Activated B cell treated with CpG ODN at 0.5 μM for 24 hours (primary cell): ENCODE measurements at regions of chr2 and their contacts with region 1.

Region 1: DNA sequence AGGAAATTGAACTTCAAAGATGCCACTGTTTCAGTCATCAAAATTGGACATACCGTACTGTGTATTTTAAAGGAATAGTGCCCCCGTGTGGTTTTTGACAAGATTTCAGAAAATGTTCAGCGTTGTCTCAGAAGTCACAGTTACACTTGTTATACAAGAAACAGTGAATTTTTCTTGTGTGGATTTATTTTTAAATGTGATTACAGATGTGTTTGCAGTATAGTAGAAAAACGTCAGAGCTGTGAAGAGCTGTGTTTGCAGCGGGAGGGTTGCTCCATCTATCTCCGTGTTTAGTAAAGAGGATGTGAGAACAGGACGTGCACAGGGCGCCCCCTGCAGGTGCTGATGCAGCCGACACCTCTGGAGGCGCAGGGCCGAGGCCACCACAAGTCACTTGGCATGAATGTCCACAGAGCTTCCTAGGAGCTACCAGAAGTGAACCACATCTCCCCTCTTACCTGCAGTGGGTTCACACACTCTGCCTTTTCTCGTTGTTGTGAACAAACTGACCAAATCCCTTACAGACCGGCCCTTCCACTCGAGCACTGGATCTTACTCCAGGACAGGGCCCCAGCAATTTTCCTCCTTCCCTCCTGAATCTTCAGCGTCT is 73.1 kb downstream of the CACNB4 start:
- DNase-seq: peak; percentile 71
- ATAC-seq: peak; percentile 93
- H3K4me3 Mint-ChIP-seq: peak overlapping the region; percentile 85
- H3K27ac Mint-ChIP-seq: no peak overlapping the region
- H3K4me1 Mint-ChIP-seq: no peaks in the 10 kb centered on the region
- H3K27me3 Mint-ChIP-seq: peaks cover 5% of the 10 kb centered on the region
- CTCF ChIP-seq: peak; percentile 99

Region 2: GRCh38 chr2:151334082-151334815 is 691.5 kb before region 1 on chr2:
- CTCF ChIA-PET with region 1: no interaction called
- POLR2A ChIA-PET with region 1: no interaction called
- intact Hi-C with region 1: no loop called
- DNase-seq: no peak
- ATAC-seq: no peak
- H3K4me3 Mint-ChIP-seq: no peak overlapping the region
- H3K27ac Mint-ChIP-seq: no peak overlapping the region
- H3K4me1 Mint-ChIP-seq: no peaks in the 10 kb centered on the region
- H3K27me3 Mint-ChIP-seq: peaks cover 3% of the 10 kb centered on the region
- CTCF ChIP-seq: no peak

Region 3: DNA sequence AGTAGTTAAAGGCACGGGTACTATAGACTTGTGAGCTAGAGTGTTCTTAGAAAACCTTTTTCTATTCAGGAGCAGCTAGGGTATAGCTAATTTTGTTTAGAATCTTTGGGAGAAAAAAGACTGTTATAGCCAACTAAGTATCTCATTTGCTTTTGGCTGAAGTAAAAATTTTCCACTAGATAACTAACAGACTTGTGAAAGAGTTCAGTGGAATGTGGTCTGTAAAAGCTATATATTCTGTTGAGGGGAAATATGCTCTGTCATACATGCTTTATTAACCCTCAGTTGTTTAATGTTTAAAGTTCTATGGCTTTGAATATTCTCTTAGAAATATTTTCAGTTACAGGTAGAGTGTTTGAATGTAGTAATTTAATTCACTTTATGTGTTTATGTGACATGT is 566.4 kb before region 1 on chr2:
- CTCF ChIA-PET with region 1: interaction called, 4 read pairs
- POLR2A ChIA-PET with region 1: no interaction called
- intact Hi-C with region 1: loop called (anchors 5 kb)
- DNase-seq: no peak
- ATAC-seq: no peak
- H3K4me3 Mint-ChIP-seq: no peak overlapping the region
- H3K27ac Mint-ChIP-seq: no peak overlapping the region
- H3K4me1 Mint-ChIP-seq: no peaks in the 10 kb centered on the region
- H3K27me3 Mint-ChIP-seq: no peaks in the 10 kb centered on the region
- CTCF ChIP-seq: no peak

Region 4: DNA sequence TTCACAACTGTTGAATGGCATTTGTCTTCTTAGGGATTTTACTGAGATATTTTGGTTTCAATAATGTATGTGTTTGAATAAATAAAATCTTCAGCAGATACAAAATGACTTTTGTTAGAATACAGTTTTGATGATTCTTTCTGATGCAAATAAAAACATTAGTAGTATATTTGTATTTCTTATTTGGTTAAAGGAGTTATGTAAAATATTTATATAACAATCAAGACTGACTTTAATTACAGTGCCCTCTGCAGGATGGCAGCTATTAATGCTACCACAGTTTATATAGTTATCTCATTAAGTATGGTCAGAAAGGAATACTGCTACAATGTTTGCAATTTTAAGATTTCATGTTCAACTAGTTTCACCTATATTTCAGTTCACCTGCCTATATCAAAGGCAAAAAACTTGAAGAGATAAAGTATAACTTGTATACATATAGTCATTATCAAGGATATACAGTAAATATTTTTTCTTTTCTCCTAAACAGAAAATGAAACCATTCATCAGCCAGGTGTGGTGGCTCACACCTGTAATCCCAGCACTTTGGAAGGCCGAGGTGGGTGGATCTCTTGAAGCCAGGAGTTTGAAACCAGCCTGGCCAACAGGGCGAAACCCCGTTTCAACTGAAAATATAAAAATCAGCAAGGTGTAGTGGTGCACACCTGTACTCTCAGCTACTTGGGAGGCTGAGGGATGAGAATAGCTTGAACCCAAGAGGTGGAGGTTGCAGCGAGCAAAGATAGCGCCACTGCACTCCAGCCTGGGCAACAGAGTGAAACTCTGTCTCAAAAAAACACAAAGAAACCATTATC is 217.3 kb before region 1 on chr2:
- CTCF ChIA-PET with region 1: interaction called, 3 read pairs
- POLR2A ChIA-PET with region 1: no interaction called
- intact Hi-C with region 1: loop called (anchors 1 kb)
- DNase-seq: no peak
- ATAC-seq: peak; percentile 60
- H3K4me3 Mint-ChIP-seq: no peak overlapping the region
- H3K27ac Mint-ChIP-seq: no peak overlapping the region
- H3K4me1 Mint-ChIP-seq: peaks cover 4% of the 10 kb centered on the region
- H3K27me3 Mint-ChIP-seq: no peaks in the 10 kb centered on the region
- CTCF ChIP-seq: peak; percentile 20

Region 5: GRCh38 chr2:152012697-152013096 is 13.1 kb before region 1 on chr2:
- CTCF ChIA-PET with region 1: interaction called, 17 read pairs
- POLR2A ChIA-PET with region 1: no interaction called
- intact Hi-C with region 1: no loop called
- DNase-seq: no peak
- ATAC-seq: no peak
- H3K4me3 Mint-ChIP-seq: no peak overlapping the region
- H3K27ac Mint-ChIP-seq: no peak overlapping the region
- H3K4me1 Mint-ChIP-seq: no peaks in the 10 kb centered on the region
- H3K27me3 Mint-ChIP-seq: peaks cover 10% of the 10 kb centered on the region
- CTCF ChIP-seq: no peak

Region 6: GRCh38 chr2:152047819-152048471 is 22.2 kb after region 1 on chr2:
- CTCF ChIA-PET with region 1: interaction called, 23 read pairs
- POLR2A ChIA-PET with region 1: interaction called, 5 read pairs
- intact Hi-C with region 1: no loop called
- DNase-seq: no peak
- ATAC-seq: no peak
- H3K4me3 Mint-ChIP-seq: no peak overlapping the region
- H3K27ac Mint-ChIP-seq: no peak overlapping the region
- H3K4me1 Mint-ChIP-seq: peaks cover 21% of the 10 kb centered on the region
- H3K27me3 Mint-ChIP-seq: no peaks in the 10 kb centered on the region
- CTCF ChIP-seq: no peak

Region 7: DNA sequence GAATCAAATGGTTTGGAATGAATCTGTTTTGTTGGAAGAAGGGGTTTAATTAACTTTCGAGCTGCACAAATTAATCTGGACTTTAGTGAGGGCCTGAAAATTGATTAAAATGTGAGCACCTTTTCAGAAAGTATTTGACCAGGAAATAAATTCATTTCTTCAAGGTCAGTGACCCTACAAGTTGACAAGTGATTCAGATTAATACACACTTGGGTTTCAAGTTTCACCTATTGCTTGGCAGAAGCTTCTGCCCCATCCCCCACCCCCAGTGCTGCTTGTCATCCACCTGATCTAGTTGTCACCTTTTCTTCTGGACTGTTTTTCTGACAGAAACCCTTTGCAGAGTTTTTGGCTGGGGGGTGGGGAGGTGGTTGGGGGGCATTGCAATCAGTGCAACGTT is 1406.6 kb after region 1 on chr2:
- CTCF ChIA-PET with region 1: no interaction called
- POLR2A ChIA-PET with region 1: no interaction called
- intact Hi-C with region 1: no loop called
- DNase-seq: no peak
- ATAC-seq: no peak
- H3K4me3 Mint-ChIP-seq: no peak overlapping the region
- H3K27ac Mint-ChIP-seq: no peak overlapping the region
- H3K4me1 Mint-ChIP-seq: no peaks in the 10 kb centered on the region
- H3K27me3 Mint-ChIP-seq: no peaks in the 10 kb centered on the region
- CTCF ChIP-seq: no peak